ENCODE measurements at regions of chr12 and their contacts with region 1.

Region 1: DNA sequence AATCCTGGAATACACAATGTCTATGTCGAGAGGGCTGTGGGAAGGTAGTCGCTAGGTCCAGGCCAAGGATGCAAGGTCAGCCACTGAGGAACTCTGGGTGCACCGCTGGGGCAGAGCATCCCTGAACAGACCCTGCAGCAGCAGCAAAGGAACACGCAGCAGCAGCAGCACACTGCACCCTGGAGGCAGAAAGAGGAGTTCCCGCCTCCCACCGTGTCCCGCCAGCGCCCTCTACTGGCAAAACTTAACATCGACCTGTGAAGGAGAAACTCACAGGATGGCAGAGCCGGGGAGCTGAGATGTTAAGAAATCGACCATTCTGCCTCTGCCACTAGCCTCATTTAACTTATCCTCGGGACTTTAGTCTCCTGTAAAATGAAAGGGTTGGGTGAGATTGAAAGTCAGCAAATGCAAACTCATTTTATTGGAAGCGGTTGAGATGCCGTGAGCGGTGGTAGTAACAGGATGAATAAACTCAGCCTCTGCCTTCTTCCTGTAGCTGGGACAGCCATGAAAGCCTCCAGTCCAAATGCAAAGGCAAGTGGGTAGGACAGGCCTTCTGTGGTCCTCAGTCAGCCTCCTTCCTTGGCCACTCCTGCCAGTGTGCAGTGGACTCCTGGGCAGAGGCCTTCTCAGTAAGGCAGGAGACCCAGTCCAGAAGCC is 45.6 kb downstream of the STAB2 start:
- DNase-seq: peak; percentile 75
- H3K4me3 Mint-ChIP-seq: no peak overlapping the region
- H3K27ac Mint-ChIP-seq: no peak overlapping the region
- H3K4me1 Mint-ChIP-seq: no peaks in the 10 kb centered on the region
- H3K27me3 Mint-ChIP-seq: no peaks in the 10 kb centered on the region

Region 2: DNA sequence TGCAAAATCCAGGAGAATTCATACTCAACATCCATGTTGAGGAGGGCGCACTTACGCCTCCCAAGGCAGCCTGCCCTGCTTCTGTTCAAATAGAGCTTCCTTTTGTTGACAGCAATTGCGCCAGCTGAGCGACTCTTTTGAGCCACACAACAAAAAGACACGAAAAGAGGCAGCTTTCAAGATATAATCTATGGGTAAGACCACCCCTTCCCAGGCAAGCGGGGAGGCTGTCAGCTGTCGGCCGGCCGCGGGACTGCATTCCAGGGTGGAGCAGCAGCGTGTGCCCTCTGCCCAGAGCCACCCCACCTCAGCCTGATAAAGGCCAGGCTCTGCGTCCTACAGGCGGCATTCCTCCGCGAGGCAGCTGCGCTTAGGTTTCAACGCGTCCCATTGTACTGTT is 61.4 kb before region 1 on chr12:
- CTCF ChIA-PET with region 1: interaction called, 7 read pairs
- POLR2A ChIA-PET with region 1: no interaction called
- intact Hi-C with region 1: loop called (anchors 1 kb)
- DNase-seq: no peak
- H3K4me3 Mint-ChIP-seq: no peak overlapping the region
- H3K27ac Mint-ChIP-seq: no peak overlapping the region
- H3K4me1 Mint-ChIP-seq: no peaks in the 10 kb centered on the region
- H3K27me3 Mint-ChIP-seq: peaks cover 52% of the 10 kb centered on the region

Region 3: DNA sequence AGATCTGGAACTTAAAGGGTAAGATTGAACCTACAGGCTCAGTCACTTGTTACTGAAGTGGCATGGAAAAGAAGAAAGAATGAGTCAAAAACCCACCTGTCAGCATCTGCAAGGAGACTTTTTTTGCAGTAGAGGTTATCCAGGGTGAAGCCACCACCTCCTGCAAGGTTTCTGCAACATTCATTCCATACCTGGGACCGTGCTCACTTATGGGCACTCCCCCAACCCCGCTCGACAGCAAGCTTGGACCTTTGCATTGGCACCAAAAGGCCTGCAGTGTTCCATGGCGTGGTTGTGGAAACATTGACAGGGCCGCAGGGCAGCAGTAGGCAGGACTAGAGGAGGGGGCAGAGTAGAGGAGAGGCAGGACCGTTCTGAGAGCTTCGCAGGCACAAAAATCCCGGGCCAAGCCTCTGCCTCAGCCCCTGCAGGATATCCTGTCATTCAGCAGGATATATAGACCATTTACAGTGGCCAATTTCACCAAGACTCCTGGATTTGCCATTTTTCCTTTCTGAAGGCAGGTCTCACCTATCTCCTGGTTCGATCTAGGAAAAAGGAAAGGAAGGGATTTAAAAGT is 45.8 kb before region 1 on chr12 and contains the start of gene STAB2:
- CTCF ChIA-PET with region 1: no interaction called
- POLR2A ChIA-PET with region 1: no interaction called
- intact Hi-C with region 1: no loop called
- DNase-seq: no peak
- H3K4me3 Mint-ChIP-seq: no peak within 1 kb of the TSS
- H3K27ac Mint-ChIP-seq: no peak within 1 kb of the TSS
- H3K4me1 Mint-ChIP-seq: no peaks in the 10 kb centered on the region
- H3K27me3 Mint-ChIP-seq: peaks cover 1% of the 10 kb centered on the region
- total RNA-seq, gene STAB2: not detected